BJ (cell line): ENCODE measurements at regions of chr1 and their contacts with region 1.

Region 1: DNA sequence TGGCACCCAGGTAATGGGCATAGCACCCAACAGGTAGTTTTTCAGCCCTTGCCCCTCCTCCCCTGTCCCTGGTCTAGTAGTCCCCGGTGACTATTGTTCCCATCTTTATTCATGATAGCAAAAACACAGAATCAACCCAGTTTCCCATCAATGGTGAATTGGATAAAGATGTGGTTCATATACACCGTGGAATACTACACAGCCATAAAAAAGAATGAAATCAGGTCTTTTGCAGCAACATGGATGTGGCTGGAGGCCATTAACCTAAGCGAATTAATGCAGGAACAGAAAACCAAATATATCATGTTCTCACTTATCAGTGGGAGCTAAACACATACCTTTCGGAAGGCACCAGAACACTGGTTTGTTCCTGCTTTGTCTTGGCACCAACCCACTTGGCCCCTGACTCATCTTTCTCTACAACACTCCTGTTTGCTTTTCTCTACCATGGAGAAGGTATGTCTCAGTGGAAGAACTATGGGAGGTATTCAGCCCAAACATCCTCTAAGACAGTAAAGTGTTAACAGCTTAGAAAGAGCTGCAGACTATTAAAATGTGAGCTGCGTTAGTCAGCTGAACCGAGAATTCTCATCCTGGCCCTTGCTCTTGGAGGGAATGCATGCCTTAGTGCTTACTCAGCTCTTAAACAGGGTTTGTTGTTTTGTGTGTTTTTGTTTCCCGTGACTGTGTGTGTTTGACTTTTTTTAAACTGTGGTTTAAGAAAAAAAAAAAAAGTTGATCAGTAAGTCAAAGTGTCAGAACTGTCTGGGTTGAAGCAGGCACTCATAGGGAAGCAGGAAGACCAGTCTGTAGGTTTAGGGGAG is 203.0 kb downstream of the TOMM20 start:
- DNase-seq: peak; percentile 99
- H3K4me3 ChIP-seq: no peak overlapping the region
- H3K27me3 ChIP-seq: no peaks in the 10 kb centered on the region
- CTCF ChIP-seq: no peak

Region 2: DNA sequence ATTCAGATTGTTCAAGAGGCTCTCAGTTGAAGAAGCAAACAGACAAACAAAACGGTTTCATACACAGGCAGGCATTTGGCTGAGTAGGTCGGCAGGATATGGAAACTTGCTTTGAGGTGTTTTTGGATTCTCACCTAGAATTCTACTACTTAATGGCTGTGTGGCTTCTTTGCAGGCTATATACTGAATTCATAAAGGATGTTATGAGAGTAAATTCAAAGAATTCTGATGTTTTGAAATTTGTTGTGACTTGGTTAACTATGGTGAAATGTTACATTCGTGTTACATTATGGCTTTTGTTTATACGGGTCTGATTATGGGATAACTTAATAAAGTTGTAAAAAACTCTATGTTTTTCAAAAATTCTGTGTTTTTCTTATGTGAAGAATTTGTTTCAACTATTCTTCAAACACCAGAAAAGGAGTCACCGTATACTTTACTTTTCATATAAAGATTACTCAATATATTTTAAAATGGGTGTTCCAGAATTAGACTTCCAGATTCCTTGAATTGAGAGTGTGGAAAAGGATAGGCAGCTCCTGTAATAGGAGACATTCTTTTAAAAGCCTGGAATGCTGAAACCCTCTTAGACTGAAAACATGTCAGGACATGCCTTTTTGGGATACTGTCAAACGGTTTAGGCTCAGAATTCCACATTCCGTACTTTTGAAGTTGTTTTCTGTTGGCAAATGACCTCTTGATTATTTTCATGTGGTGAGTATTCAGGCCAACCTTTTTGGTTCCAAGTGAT is 307.5 kb before region 1 on chr1:
- CTCF ChIA-PET with region 1: interaction called, 4 read pairs
- POLR2A ChIA-PET with region 1: interaction called, 10 read pairs
- DNase-seq: peak; percentile 73
- H3K4me3 ChIP-seq: no peak overlapping the region
- H3K27me3 ChIP-seq: no peaks in the 10 kb centered on the region
- CTCF ChIP-seq: no peak

Region 3: GRCh38 chr1:235113183-235113917 is 187.7 kb after region 1 on chr1:
- CTCF ChIA-PET with region 1: no interaction called
- POLR2A ChIA-PET with region 1: no interaction called
- DNase-seq: no peak
- H3K4me3 ChIP-seq: no peak overlapping the region
- H3K27me3 ChIP-seq: no peaks in the 10 kb centered on the region
- CTCF ChIP-seq: no peak